PC-9 (cell line): ENCODE measurements at regions of chr5 and their contacts with region 1.

Region 1: DNA sequence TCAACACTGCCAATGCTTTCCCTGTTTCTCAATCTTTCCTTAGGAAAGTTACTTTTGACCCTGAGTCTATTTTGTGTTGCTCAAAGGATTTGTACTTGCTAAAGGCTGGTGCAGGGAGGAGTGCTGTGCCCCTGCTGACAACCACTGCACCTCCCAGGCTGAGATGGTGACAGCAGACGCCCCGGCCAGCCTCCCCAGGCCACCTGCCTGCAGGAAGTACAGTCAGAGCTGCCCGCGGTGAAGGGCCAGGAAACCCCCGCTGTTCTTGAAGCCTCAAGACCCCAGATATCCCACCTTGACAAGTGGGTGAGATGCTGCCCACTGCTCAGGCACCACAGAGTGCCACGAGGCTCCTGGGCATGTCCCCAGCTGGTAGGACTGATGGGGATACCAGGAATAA is 44.2 kb upstream of the CKMT2 start:
- DNase-seq: no peak
- H3K4me3 ChIP-seq: no peak overlapping the region
- H3K27ac ChIP-seq: no peak overlapping the region
- H3K4me1 ChIP-seq: no peaks in the 10 kb centered on the region
- H3K27me3 ChIP-seq: no peaks in the 10 kb centered on the region
- CTCF ChIP-seq: no peak

Region 2: GRCh38 chr5:80825786-80826460 is 363.0 kb before region 1 on chr5:
- CTCF ChIA-PET with region 1: no interaction called
- POLR2A ChIA-PET with region 1: interaction called, 13 read pairs
- intact Hi-C with region 1: no loop called
- DNase-seq: no peak
- H3K4me3 ChIP-seq: no peak overlapping the region
- H3K27ac ChIP-seq: no peak overlapping the region
- H3K4me1 ChIP-seq: no peaks in the 10 kb centered on the region
- H3K27me3 ChIP-seq: no peaks in the 10 kb centered on the region
- CTCF ChIP-seq: no peak

Region 3: DNA sequence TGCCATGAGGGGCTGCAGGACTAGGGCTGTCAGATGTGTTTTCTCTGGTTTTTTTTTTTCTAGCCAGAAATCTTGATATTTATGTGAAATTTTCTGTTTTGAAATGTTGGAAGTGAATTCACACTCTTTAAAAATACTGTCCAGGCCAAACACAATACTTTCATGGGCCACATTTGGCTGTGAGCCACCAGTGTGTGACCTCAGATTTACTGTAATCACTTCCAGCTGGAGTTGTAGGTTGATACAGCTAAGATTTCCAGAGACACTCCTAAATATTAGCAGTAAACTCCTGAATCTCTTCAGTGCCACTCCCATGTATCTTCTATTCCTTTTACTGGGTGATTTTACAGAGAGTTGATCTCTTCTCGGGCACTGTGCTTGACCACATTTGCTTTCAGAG is 48.0 kb before region 1 on chr5:
- CTCF ChIA-PET with region 1: no interaction called
- POLR2A ChIA-PET with region 1: no interaction called
- intact Hi-C with region 1: no loop called
- DNase-seq: no peak
- H3K4me3 ChIP-seq: no peak overlapping the region
- H3K27ac ChIP-seq: no peak overlapping the region
- H3K4me1 ChIP-seq: no peaks in the 10 kb centered on the region
- H3K27me3 ChIP-seq: no peaks in the 10 kb centered on the region
- CTCF ChIP-seq: no peak

Region 4: GRCh38 chr5:81639556-81639955 is 450.6 kb after region 1 on chr5:
- CTCF ChIA-PET with region 1: no interaction called
- POLR2A ChIA-PET with region 1: no interaction called
- intact Hi-C with region 1: no loop called
- DNase-seq: no peak
- H3K4me3 ChIP-seq: no peak overlapping the region
- H3K27ac ChIP-seq: no peak overlapping the region
- H3K4me1 ChIP-seq: no peaks in the 10 kb centered on the region
- H3K27me3 ChIP-seq: no peaks in the 10 kb centered on the region
- CTCF ChIP-seq: no peak